RWPE1 (cell line): ENCODE measurements at regions of chr15 and their contacts with region 1.

Region 1: GRCh38 chr15:89206908-89207331 is 14.5 kb downstream of the RLBP1 start:
- DNase-seq: peak; percentile 91
- H3K27ac ChIP-seq: no peak overlapping the region
- CTCF ChIP-seq: peak; percentile 99

Region 2: GRCh38 chr15:89041507-89041906 is 165.4 kb before region 1 on chr15:
- CTCF ChIA-PET with region 1: no interaction called
- POLR2A ChIA-PET with region 1: no interaction called
- DNase-seq: no peak
- H3K27ac ChIP-seq: no peak overlapping the region
- CTCF ChIP-seq: no peak

Region 3: GRCh38 chr15:89112341-89112971 is 94.5 kb before region 1 on chr15:
- CTCF ChIA-PET with region 1: no interaction called
- POLR2A ChIA-PET with region 1: no interaction called
- DNase-seq: no peak
- H3K27ac ChIP-seq: peak overlapping the region; percentile 74
- CTCF ChIP-seq: no peak

Region 4: GRCh38 chr15:89221543-89221942 is 14.6 kb after region 1 on chr15 and contains the start of gene RLBP1:
- CTCF ChIA-PET with region 1: interaction called, 20 read pairs
- POLR2A ChIA-PET with region 1: interaction called, 6 read pairs
- DNase-seq: peak; percentile 48
- H3K27ac ChIP-seq: no peak within 1 kb of the TSS
- CTCF ChIP-seq: no peak

Region 5: DNA sequence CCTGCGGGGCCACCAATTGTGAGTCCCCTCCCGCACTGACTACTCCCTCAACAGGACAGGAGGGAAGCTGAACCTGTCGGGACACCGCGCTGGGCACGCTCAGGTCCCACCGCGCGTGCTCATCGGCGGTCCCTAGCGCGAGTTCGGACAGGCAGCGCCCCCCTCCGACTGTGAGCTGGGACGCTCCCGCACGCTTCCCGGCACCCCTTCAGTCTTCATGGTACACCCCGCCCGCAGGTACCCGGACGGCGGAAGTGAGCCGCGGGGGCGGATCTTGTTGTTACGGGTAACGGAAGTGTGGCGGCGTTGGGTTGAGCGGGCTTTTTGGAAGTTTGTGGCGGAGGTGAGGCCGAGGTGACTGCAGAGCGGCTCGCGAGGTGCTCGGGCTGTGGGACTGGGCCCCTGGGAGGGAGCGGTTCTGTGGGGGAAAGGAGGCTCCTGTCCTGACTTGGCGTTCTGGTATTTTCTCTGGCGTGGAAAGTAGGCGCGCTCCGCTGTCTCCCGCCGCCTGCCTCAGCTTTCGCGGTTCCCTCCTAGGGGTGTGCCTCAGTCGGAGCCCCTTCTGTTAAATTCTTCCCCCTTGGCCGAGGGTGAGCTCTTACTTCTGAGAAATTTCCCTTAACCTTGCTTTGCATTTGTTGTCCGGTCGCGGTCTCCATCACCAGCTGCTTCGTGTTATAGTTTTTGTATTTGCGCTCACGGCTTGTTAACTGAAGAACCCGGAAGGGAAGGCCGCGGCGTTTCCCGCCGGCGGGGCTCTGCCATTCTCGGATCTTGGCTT is 37.0 kb after region 1 on chr15 and contains the start of gene FANCI:
- CTCF ChIA-PET with region 1: interaction called, 18 read pairs
- POLR2A ChIA-PET with region 1: interaction called, 6 read pairs
- DNase-seq: peak; percentile 97
- H3K27ac ChIP-seq: peak within 1 kb of the TSS; percentile 84
- CTCF ChIP-seq: peak; percentile 79